Activated CD4-positive, alpha-beta T cell treated with anti-CD3 and anti-CD28 coated beads, Interleukin-2, amount 10 ng/mL, durations not matched to agents 24 days and 14 days (primary cell): ENCODE measurements at regions of chr11 and their contacts with region 1.

Region 1: GRCh38 chr11:82718307-82718706 is 15.4 kb downstream of the FAM181B start:
- DNase-seq: peak; percentile 63
- H3K4me3 Mint-ChIP-seq: no peak overlapping the region
- H3K27ac Mint-ChIP-seq: no peak overlapping the region
- H3K4me1 Mint-ChIP-seq: no peaks in the 10 kb centered on the region
- H3K27me3 Mint-ChIP-seq: peaks cover 2% of the 10 kb centered on the region

Region 2: GRCh38 chr11:82867495-82868082 is 149.3 kb after region 1 on chr11:
- intact Hi-C with region 1: loop called (anchors 1 kb)
- DNase-seq: peak; percentile 93
- H3K4me3 Mint-ChIP-seq: no peak overlapping the region
- H3K27ac Mint-ChIP-seq: no peak overlapping the region
- H3K4me1 Mint-ChIP-seq: peaks cover 6% of the 10 kb centered on the region
- H3K27me3 Mint-ChIP-seq: peaks cover 2% of the 10 kb centered on the region